ENCODE measurements at regions of chr11 and their contacts with region 1.

Region 1: DNA sequence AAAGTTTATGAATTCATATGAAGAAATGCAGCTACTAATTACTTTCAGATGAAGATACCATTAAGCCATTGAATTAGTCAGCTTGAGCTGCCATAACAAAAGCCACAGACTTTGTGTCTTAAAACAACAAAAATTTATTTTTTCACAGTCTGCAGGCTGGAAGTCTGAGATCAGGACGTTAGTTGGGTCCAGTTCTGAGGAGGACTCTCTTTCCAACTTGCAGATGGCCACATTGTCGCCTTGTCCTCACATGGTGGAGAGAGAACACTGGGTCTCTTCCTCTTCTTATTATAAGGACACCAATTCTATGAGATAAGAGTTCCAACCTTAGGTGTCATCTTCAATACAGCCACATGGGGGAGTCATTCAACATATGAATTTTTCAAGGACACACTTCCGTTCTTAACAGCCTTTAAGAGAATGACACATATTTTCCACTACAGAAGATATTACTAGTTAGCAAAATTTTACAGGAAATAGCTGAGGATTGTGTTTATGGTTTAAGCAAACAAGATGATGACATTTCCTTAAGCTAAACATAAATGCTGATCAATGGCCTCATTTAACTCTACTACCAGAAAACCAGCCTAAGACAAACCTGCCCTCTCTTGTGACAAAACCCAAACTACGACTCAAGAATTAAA is 56.0 kb downstream of the DCUN1D5 start:
- DNase-seq: peak in 8 of 9 donors; percentile 20 to 64 (median 54)
- ATAC-seq: peak; percentile 96
- H3K4me3 ChIP-seq: no peak overlapping the region
- H3K4me3 Mint-ChIP-seq: peak overlapping the region in 3 of 10 donors; percentile 7 to 25 (median 12)
- H3K27ac ChIP-seq: no peak overlapping the region
- H3K27ac Mint-ChIP-seq: peak overlapping the region in 5 of 9 donors; percentile 39 to 87 (median 41)
- H3K4me1 ChIP-seq: no peaks in the 10 kb centered on the region
- H3K4me1 Mint-ChIP-seq: peaks cover 0 to 21% (median 6%) of the 10 kb centered on the region in 7 donors
- H3K27me3 ChIP-seq: no peaks in the 10 kb centered on the region
- H3K27me3 Mint-ChIP-seq: peaks cover 0 to 5% (median 0%) of the 10 kb centered on the region in 5 donors

Region 2: GRCh38 chr11:102981324-102981910 is 54.5 kb before region 1 on chr11:
- CTCF ChIA-PET with region 1: no interaction called
- POLR2A ChIA-PET with region 1: no interaction called
- intact Hi-C with region 1: loop called in 1 of 2 experiments (anchors 5 kb)
- DNase-seq: no peak
- ATAC-seq: no peak
- H3K4me3 ChIP-seq: no peak overlapping the region
- H3K4me3 Mint-ChIP-seq: peak overlapping the region in 1 of 10 donors; percentile 2
- H3K27ac ChIP-seq: no peak overlapping the region
- H3K27ac Mint-ChIP-seq: peak overlapping the region in 1 of 9 donors; percentile 81
- H3K4me1 ChIP-seq: no peaks in the 10 kb centered on the region
- H3K4me1 Mint-ChIP-seq: peaks cover 0 to 6% (median 0%) of the 10 kb centered on the region in 7 donors
- H3K27me3 ChIP-seq: no peaks in the 10 kb centered on the region
- H3K27me3 Mint-ChIP-seq: peaks cover 4 to 18% (median 5%) of the 10 kb centered on the region in 5 donors

Region 3: DNA sequence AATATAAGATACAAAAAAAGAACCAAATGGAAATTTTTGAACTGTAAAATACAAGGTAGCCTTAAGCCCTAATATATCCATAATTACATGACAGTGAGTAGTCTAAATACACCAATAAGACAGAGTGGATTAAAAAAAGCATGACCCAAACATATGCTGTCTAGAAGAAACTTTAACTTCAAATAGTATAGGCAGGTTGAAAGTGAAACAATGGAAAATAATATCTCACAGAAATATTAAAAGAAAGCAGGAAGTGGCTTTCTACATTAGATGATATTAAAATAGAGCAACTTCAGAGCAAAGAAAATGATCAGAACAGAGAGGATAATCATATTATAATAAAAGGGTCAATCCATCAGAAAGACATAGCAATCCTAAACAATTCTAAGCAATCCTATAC is 34.2 kb after region 1 on chr11:
- CTCF ChIA-PET with region 1: no interaction called
- POLR2A ChIA-PET with region 1: no interaction called
- intact Hi-C with region 1: loop called in 1 of 2 experiments (anchors 5 kb)
- DNase-seq: no peak
- ATAC-seq: peak; percentile 20
- H3K4me3 ChIP-seq: no peak overlapping the region
- H3K4me3 Mint-ChIP-seq: peak overlapping the region in 5 of 10 donors; percentile 2 to 56 (median 8)
- H3K27ac ChIP-seq: no peak overlapping the region
- H3K27ac Mint-ChIP-seq: peak overlapping the region in 2 of 9 donors; percentile 6 to 17
- H3K4me1 ChIP-seq: peaks cover 0 to 10% of the 10 kb centered on the region in 2 donors
- H3K4me1 Mint-ChIP-seq: peaks cover 23 to 54% (median 41%) of the 10 kb centered on the region in 7 donors
- H3K27me3 ChIP-seq: no peaks in the 10 kb centered on the region
- H3K27me3 Mint-ChIP-seq: no peaks in the 10 kb centered on the region

Region 4: GRCh38 chr11:103108933-103109817 is 73.3 kb after region 1 on chr11 and contains the start of gene DYNC2H1:
- CTCF ChIA-PET with region 1: no interaction called
- POLR2A ChIA-PET with region 1: interaction called, 3 read pairs
- intact Hi-C with region 1: loop called (anchors 1 kb)
- DNase-seq: peak; percentile 78 to 91 (median 89)
- ATAC-seq: peak; percentile 99
- H3K4me3 ChIP-seq: peak within 1 kb of the TSS; percentile 93
- H3K4me3 Mint-ChIP-seq: peak within 1 kb of the TSS; percentile 87 to 99 (median 94)
- H3K27ac ChIP-seq: peak within 1 kb of the TSS; percentile 60
- H3K27ac Mint-ChIP-seq: peak within 1 kb of the TSS; percentile 87 to 99 (median 92)
- H3K4me1 ChIP-seq: peaks cover 4 to 6% of the 10 kb centered on the region in 2 donors
- H3K4me1 Mint-ChIP-seq: peaks cover 5 to 19% (median 13%) of the 10 kb centered on the region in 7 donors
- H3K27me3 ChIP-seq: no peaks in the 10 kb centered on the region
- H3K27me3 Mint-ChIP-seq: peaks cover 6 to 42% (median 7%) of the 10 kb centered on the region in 5 donors
- total RNA-seq, gene DYNC2H1: 1.5 to 4.2 (median 3.0) TPM

Region 5: GRCh38 chr11:103601225-103601846 is 565.4 kb after region 1 on chr11:
- CTCF ChIA-PET with region 1: no interaction called
- POLR2A ChIA-PET with region 1: no interaction called
- intact Hi-C with region 1: loop called in 1 of 2 experiments (anchors 1 kb)
- DNase-seq: peak in 2 of 9 donors; percentile 1 to 3
- ATAC-seq: peak; percentile 70
- H3K4me3 ChIP-seq: no peak overlapping the region
- H3K4me3 Mint-ChIP-seq: no peak overlapping the region
- H3K27ac ChIP-seq: no peak overlapping the region
- H3K27ac Mint-ChIP-seq: no peak overlapping the region
- H3K4me1 ChIP-seq: no peaks in the 10 kb centered on the region
- H3K4me1 Mint-ChIP-seq: no peaks in the 10 kb centered on the region
- H3K27me3 ChIP-seq: no peaks in the 10 kb centered on the region
- H3K27me3 Mint-ChIP-seq: peaks cover 5 to 10% (median 8%) of the 10 kb centered on the region in 5 donors

Measured in naive thymus-derived CD4-positive, alpha-beta T cell (primary cell).